MCF 10A (cell line): ENCODE measurements at regions of chr5 and their contacts with region 1.

Region 1: DNA sequence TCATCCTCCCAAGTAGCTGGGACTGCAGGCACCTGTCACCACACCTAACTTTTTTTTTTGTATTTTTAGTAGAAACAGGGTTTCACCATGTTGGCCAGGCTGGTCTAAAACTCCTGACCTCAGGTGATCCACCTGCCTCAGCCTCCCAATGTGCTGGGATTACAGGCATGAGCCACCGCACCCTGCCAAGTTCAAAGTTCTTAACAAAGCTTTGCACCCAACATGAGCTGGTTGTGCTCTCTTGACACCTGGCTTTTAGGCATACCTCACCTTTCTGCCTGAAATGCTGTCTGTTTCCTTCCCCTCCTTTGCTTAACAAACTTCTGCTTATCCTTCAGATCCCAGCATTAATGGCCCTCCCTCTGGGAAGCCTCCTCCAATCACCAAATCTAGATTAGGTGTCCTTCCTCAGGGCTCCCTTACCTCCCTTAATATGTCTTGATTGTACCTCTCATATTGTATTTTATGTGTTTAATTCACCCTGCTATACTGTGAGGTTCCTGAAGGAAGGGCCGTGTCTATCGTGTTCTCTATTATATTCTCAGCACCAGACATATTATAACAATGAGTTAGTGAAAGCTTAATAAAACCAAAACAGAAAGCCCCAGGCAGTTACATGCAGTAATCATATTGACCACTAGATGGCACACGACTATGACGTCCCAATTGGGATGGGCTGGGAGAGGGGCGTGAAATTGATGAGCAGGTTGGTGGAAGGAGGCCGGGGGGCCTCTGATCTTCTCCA is 62.9 kb upstream of the PPARGC1B start:
- DNase-seq: peak; percentile 66
- H3K4me3 Mint-ChIP-seq: no peak overlapping the region
- H3K27ac Mint-ChIP-seq: no peak overlapping the region
- H3K4me1 Mint-ChIP-seq: peaks cover 8% of the 10 kb centered on the region
- H3K27me3 Mint-ChIP-seq: no peaks in the 10 kb centered on the region
- CTCF ChIP-seq: peak; percentile 96

Region 2: GRCh38 chr5:149677731-149678130 is 10.5 kb after region 1 on chr5:
- CTCF ChIA-PET with region 1: interaction called, 27 read pairs
- POLR2A ChIA-PET with region 1: interaction called, 3 read pairs
- intact Hi-C with region 1: no loop called
- DNase-seq: no peak
- H3K4me3 Mint-ChIP-seq: no peak overlapping the region
- H3K27ac Mint-ChIP-seq: no peak overlapping the region
- H3K4me1 Mint-ChIP-seq: peaks cover 7% of the 10 kb centered on the region
- H3K27me3 Mint-ChIP-seq: peaks cover 22% of the 10 kb centered on the region
- CTCF ChIP-seq: no peak

Region 3: DNA sequence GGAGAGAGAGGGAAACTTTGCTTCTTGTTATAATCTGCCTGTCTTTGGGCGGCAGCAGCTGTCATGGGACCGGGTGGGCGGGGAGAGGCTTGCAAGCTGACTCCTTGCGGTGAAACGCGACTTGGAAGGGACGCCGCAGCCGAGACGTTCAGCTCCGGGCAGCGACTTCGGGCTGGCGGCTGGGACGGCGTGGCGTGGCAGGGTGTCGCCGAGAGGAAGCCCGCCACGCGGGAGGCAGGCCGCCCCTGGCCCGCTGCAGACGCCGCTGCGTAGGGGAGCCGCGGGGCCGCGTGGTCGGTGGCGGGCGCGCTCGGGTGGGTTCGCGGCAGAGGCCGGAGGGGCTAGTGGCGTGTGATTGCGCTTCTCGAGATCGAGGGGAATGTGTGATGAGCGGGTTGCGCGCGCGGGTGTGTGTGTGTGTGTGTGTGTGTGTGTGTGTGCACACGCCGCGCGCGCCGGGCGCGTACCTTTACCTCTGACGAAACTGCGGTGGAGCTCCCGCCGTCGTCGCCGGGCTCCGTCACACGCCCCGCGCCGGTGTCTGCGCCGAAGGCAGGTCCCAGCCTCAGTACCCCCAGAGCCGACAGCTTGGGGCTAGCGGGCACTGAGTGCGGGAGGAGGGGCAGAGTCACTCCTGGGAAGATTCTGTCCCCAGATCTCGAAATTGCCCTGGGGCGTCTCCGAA is 64.5 kb after region 1 on chr5:
- CTCF ChIA-PET with region 1: interaction called, 8 read pairs
- POLR2A ChIA-PET with region 1: interaction called, 13 read pairs
- intact Hi-C with region 1: loop called (anchors 1 kb)
- DNase-seq: peak; percentile 95
- H3K4me3 Mint-ChIP-seq: peak overlapping the region; percentile 94
- H3K27ac Mint-ChIP-seq: peak overlapping the region; percentile 66
- H3K4me1 Mint-ChIP-seq: peaks cover 27% of the 10 kb centered on the region
- H3K27me3 Mint-ChIP-seq: no peaks in the 10 kb centered on the region
- CTCF ChIP-seq: no peak

Region 4: DNA sequence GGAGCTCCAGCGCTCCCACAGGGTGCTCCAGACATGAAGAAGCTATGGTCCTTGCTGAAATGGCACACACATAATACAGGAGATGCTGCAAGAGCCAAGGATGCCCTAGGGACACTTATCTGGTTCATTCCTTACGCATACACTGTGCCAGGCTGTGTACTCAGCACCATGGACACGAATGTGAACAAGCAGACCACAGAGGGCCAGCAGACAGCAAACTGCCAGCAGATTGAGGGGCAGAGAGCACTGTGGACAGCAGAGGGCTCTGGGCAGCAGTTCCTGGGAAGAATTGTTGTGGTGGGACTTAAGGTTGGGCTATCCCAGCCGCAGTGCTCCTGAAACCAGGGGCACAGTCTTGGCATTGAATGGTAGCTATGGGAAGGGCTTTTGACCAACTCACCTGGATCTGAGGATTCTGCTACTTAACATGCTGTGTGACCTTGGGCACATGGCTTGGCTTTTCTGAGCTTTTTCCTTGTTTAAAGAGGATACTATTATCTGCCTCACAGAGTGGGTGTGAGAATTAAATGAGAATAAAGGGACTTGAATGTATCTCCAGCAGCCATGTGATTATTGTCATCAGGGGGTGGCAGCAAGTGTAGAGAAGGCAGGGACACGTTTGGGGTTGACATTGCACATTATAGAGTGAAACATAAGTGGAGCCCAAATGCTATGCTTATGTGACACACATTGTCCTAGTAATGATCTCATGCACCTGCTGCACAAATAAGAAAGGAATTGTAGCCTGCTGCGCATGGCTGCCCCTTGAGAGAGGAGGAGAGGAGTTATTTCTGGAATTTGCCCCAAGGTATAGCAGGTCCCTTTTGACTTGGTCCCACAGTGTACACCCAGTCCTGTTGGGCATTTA is 93.0 kb after region 1 on chr5:
- CTCF ChIA-PET with region 1: interaction called, 11 read pairs
- POLR2A ChIA-PET with region 1: interaction called, 3 read pairs
- intact Hi-C with region 1: no loop called
- DNase-seq: no peak
- H3K4me3 Mint-ChIP-seq: no peak overlapping the region
- H3K27ac Mint-ChIP-seq: no peak overlapping the region
- H3K4me1 Mint-ChIP-seq: peaks cover 22% of the 10 kb centered on the region
- H3K27me3 Mint-ChIP-seq: no peaks in the 10 kb centered on the region
- CTCF ChIP-seq: no peak